Uterus (tissue), 4 donors: ENCODE measurements at regions of chr10 and their contacts with region 1.

Region 1: GRCh38 chr10:28250782-28251181 is 52.1 kb downstream of the MPP7 start:
- DNase-seq: no peak
- H3K4me3 ChIP-seq: no peak overlapping the region
- H3K27ac ChIP-seq: no peak overlapping the region
- H3K4me1 ChIP-seq: no peaks in the 10 kb centered on the region
- H3K27me3 ChIP-seq: no peaks in the 10 kb centered on the region
- CTCF ChIP-seq: peak; percentile 51 to 61 (median 56)
- POLR2A ChIP-seq: no peak

Region 2: DNA sequence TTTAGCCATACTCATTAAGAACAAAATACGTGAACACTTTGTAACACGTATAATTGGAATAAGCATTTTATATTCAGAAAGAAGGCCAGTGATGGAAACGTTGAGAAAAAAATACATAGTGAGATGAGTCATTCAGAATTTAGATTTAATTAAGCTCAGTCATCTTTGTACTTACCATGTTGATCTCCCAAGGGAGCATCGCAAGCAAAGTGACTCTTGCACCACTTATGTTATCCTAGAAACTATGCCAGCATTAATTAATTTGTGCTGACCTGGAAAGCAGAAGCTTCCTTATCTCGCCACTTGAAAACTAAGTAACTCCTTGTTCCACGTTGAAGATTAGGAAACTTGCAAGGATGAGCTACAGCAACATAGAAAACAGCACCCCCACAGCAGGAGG is 61.8 kb after region 1 on chr10:
- intact Hi-C with region 1: no loop called
- DNase-seq: no peak
- H3K4me3 ChIP-seq: no peak overlapping the region
- H3K27ac ChIP-seq: no peak overlapping the region
- H3K4me1 ChIP-seq: no peaks in the 10 kb centered on the region
- H3K27me3 ChIP-seq: no peaks in the 10 kb centered on the region
- CTCF ChIP-seq: no peak
- POLR2A ChIP-seq: no peak

Region 3: GRCh38 chr10:28381903-28382347 is 131.1 kb after region 1 on chr10:
- intact Hi-C with region 1: loop called (anchors 5 kb)
- DNase-seq: peak; percentile 81 to 88
- H3K4me3 ChIP-seq: no peak overlapping the region
- H3K27ac ChIP-seq: no peak overlapping the region
- H3K4me1 ChIP-seq: no peaks in the 10 kb centered on the region
- H3K27me3 ChIP-seq: no peaks in the 10 kb centered on the region
- CTCF ChIP-seq: peak; percentile 93 to 96 (median 94)
- POLR2A ChIP-seq: no peak